WTC11 (cell line): ENCODE measurements at regions of chr22 and their contacts with region 1.

Region 1: GRCh38 chr22:37633625-37634416 is 5.6 kb upstream of the SH3BP1 start:
- DNase-seq: peak; percentile 68
- ATAC-seq: peak; percentile 72
- H3K4me3 Mint-ChIP-seq: peak overlapping the region; percentile 33
- H3K27ac Mint-ChIP-seq: peak overlapping the region; percentile 53; the same call in 1 of the 2 replicates
- H3K4me1 Mint-ChIP-seq: peaks cover 21% of the 10 kb centered on the region
- H3K27me3 Mint-ChIP-seq: no peaks in the 10 kb centered on the region
- CTCF ChIP-seq: no peak

Region 2: DNA sequence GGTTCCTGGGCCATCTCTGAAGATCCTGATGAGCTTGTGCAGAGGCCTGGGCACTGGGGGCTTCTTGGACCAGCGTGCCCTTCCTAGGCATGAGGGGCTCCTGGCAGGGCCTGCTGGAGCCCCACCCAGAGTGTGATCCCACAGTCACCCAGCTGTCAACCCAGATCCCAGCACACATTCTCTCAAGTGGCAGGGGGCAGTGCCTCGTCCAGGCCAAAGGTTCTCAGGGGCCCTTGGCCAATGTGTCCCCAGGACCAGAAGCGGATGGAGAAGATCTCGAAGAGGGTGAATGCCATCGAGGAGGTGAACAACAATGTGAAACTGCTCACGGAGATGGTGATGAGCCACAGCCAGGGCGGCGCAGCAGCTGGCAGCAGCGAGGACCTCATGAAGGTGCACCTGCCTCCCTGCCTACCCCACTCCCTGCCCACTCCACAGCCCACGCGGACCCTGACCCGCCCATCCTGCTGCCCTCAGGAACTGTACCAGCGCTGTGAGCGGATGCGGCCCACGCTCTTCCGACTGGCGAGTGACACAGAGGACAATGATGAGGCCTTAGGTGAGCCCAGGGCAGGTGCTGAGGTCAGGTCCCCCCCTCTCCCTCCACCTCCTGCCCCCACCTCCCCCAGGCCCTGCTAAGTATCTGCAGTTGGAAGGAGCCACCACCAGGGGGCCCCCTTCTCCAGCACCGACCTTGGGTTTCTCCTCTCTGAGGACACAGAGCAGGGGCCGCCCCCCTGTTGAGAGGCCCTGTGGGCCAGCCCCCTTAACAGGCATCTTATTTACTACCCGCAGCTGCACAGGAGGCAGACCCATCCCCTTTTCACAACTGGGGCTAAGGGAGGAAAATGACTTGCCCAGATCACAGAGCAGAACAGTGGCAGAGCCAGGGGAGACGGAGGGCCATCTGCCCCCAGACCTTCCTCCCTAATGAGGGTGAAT is 10.5 kb before region 1 on chr22:
- CTCF ChIA-PET with region 1: interaction called, 12 read pairs
- POLR2A ChIA-PET with region 1: no interaction called
- DNase-seq: peak; percentile 88
- ATAC-seq: peak; percentile 89
- H3K4me3 Mint-ChIP-seq: no peak overlapping the region
- H3K27ac Mint-ChIP-seq: no peak overlapping the region
- H3K4me1 Mint-ChIP-seq: peaks cover 3% of the 10 kb centered on the region
- H3K27me3 Mint-ChIP-seq: no peaks in the 10 kb centered on the region
- CTCF ChIP-seq: peak; percentile 88

Region 3: DNA sequence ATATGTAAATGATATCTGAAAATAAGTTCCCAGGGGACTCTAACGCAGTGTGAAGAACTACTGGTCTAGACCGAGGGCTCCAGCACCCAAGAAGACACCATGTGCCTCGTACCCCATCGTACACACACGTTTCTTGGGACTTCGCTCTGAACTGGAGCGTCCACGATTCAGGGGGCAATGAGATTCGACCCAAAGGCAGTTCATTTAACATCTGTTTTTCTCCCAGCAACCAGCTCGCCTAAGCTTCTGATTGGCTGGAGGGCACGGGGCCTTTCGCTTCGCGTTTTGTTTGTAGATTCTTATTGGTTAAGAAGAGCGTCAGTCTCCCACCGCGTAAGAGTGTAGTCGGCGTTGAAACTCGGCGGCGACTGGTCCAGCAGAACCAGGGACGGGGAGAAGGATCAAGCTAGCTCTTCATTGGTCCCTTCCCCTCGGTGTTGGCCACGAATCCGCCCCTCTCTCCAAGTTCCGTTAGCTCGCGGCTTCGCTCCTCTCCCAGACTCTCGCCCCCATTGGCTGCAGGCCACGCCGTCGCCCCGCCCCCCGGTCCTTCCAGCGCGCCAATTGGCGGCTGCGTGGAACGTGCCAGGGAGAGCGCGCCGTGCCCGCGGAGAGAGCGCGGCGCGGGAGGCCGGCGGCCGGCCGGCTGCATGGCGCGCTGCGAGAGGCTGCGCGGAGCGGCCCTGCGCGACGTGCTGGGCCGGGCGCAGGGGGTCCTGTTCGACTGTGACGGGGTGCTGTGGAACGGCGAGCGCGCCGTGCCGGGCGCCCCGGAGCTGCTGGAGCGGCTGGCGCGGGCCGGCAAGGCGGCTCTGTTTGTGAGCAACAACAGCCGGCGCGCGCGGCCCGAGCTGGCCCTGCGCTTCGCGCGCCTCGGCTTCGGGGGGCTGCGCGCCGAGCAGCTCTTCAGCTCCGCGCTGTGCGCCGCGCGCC is 24.6 kb after region 1 on chr22 and contains the start of gene PDXP:
- CTCF ChIA-PET with region 1: interaction called, 26 read pairs
- POLR2A ChIA-PET with region 1: interaction called, 3 read pairs
- DNase-seq: peak; percentile 98
- ATAC-seq: peak; percentile 96
- H3K4me3 Mint-ChIP-seq: peak within 1 kb of the TSS; percentile 82
- H3K27ac Mint-ChIP-seq: peak within 1 kb of the TSS; percentile 97
- H3K4me1 Mint-ChIP-seq: peaks cover 29% of the 10 kb centered on the region
- H3K27me3 Mint-ChIP-seq: no peaks in the 10 kb centered on the region
- CTCF ChIP-seq: no peak
- total RNA-seq, gene PDXP: 36.1 to 42.5 TPM (median 42.3 TPM) in 3 replicates

Region 4: GRCh38 chr22:37676736-37677492 is 43.1 kb after region 1 on chr22:
- CTCF ChIA-PET with region 1: interaction called, 20 read pairs
- POLR2A ChIA-PET with region 1: interaction called, 3 read pairs
- DNase-seq: peak; percentile 86
- ATAC-seq: peak; percentile 74
- H3K4me3 Mint-ChIP-seq: peak overlapping the region; percentile 72
- H3K27ac Mint-ChIP-seq: peak overlapping the region; percentile 84
- H3K4me1 Mint-ChIP-seq: peaks cover 13% of the 10 kb centered on the region
- H3K27me3 Mint-ChIP-seq: peaks cover 18% of the 10 kb centered on the region
- CTCF ChIP-seq: no peak

Region 5: GRCh38 chr22:37686002-37686982 is 52.5 kb after region 1 on chr22 and contains the start of gene NOL12:
- CTCF ChIA-PET with region 1: interaction called, 20 read pairs
- POLR2A ChIA-PET with region 1: interaction called, 6 read pairs
- DNase-seq: peak; percentile 84
- ATAC-seq: peak; percentile 84
- H3K4me3 Mint-ChIP-seq: peak within 1 kb of the TSS; percentile 99
- H3K27ac Mint-ChIP-seq: peak within 1 kb of the TSS; percentile 96
- H3K4me1 Mint-ChIP-seq: peaks cover 10% of the 10 kb centered on the region
- H3K27me3 Mint-ChIP-seq: peaks cover 1% of the 10 kb centered on the region
- CTCF ChIP-seq: no peak
- total RNA-seq, gene NOL12: 20.3 to 24.9 TPM (median 22.0 TPM) in 3 replicates